T-cell (primary cell): ENCODE measurements at regions of chr1 and their contacts with region 1.

Region 1: GRCh38 chr1:96674911-96675310 is 46.7 kb upstream of the PTBP2 start:
- DNase-seq: no peak
- ATAC-seq: no peak
- H3K4me3 ChIP-seq: no peak overlapping the region
- H3K4me3 Mint-ChIP-seq: no peak overlapping the region
- H3K27ac ChIP-seq: no peak overlapping the region
- H3K27ac Mint-ChIP-seq: no peak overlapping the region
- H3K4me1 ChIP-seq: no peaks in the 10 kb centered on the region
- H3K4me1 Mint-ChIP-seq: no peaks in the 10 kb centered on the region
- H3K27me3 ChIP-seq: no peaks in the 10 kb centered on the region
- H3K27me3 Mint-ChIP-seq: peaks cover 2 to 6% of the 10 kb centered on the region in 2 donors

Region 2: GRCh38 chr1:95197616-95198252 is 1477.2 kb before region 1 on chr1:
- CTCF ChIA-PET with region 1: no interaction called
- POLR2A ChIA-PET with region 1: no interaction called
- DNase-seq: no peak
- ATAC-seq: no peak
- H3K4me3 ChIP-seq: no peak overlapping the region
- H3K4me3 Mint-ChIP-seq: no peak overlapping the region
- H3K27ac ChIP-seq: no peak overlapping the region
- H3K27ac Mint-ChIP-seq: no peak overlapping the region
- H3K4me1 ChIP-seq: no peaks in the 10 kb centered on the region
- H3K4me1 Mint-ChIP-seq: no peaks in the 10 kb centered on the region
- H3K27me3 ChIP-seq: no peaks in the 10 kb centered on the region
- H3K27me3 Mint-ChIP-seq: peaks cover 8 to 19% of the 10 kb centered on the region in 2 donors

Region 3: GRCh38 chr1:96487394-96487793 is 187.5 kb before region 1 on chr1:
- CTCF ChIA-PET with region 1: no interaction called
- POLR2A ChIA-PET with region 1: no interaction called
- DNase-seq: no peak
- ATAC-seq: no peak
- H3K4me3 ChIP-seq: no peak overlapping the region
- H3K4me3 Mint-ChIP-seq: no peak overlapping the region
- H3K27ac ChIP-seq: no peak overlapping the region
- H3K27ac Mint-ChIP-seq: no peak overlapping the region
- H3K4me1 ChIP-seq: no peaks in the 10 kb centered on the region
- H3K4me1 Mint-ChIP-seq: no peaks in the 10 kb centered on the region
- H3K27me3 ChIP-seq: no peaks in the 10 kb centered on the region
- H3K27me3 Mint-ChIP-seq: no peaks in the 10 kb centered on the region

Region 4: DNA sequence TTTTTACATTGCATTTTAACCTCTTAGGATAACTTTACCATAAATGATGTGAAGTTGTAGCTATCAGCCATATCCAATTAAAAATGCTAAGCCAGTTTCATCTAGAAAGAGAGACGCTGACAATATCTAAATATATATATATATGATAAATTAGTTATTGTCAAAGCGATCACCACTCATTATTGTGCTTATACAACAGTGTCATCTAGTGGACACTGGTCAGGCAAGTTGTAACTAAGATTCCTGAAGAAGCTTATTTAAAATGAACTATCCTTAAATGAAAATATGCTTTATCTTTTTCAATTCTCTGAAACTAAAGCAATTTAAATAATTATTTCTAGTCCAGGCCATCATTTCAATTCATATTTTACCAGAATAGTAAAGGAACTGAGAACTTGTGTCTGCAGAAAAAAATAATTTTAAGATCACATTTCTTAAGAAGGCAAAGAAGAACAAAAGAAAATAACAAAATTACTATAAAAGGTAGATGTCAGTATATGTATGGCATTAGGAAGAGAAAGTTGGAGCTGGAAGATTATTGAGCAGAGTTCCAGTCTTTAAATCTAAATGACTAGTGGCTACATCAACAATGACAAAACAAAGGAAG is 1793.3 kb after region 1 on chr1:
- CTCF ChIA-PET with region 1: no interaction called
- POLR2A ChIA-PET with region 1: interaction called in 1 of 2 experiments, 19 read pairs
- DNase-seq: peak in 1 of 35 experiments; percentile 61
- ATAC-seq: no peak
- H3K4me3 ChIP-seq: no peak overlapping the region
- H3K4me3 Mint-ChIP-seq: no peak overlapping the region
- H3K27ac ChIP-seq: no peak overlapping the region
- H3K27ac Mint-ChIP-seq: no peak overlapping the region
- H3K4me1 ChIP-seq: no peaks in the 10 kb centered on the region
- H3K4me1 Mint-ChIP-seq: no peaks in the 10 kb centered on the region
- H3K27me3 ChIP-seq: peaks cover 0 to 2% of the 10 kb centered on the region in 2 experiments
- H3K27me3 Mint-ChIP-seq: no peaks in the 10 kb centered on the region